HCT116 (cell line): ENCODE measurements at regions of chr11 and their contacts with region 1.

Region 1: GRCh38 chr11:118295834-118296454 is 8.6 kb upstream of the CD3E start:
- DNase-seq: peak; percentile 43
- ATAC-seq: peak; percentile 78
- H3K4me3 ChIP-seq: no peak overlapping the region
- H3K27ac ChIP-seq: no peak overlapping the region
- H3K4me1 ChIP-seq: peaks cover 0 to 10% of the 10 kb centered on the region in 2 experiments; a peak in 2 of 4 replicates
- H3K27me3 ChIP-seq: no peaks in the 10 kb centered on the region
- CTCF ChIP-seq: peak; percentile 72 to 79 (median 73)
- POLR2A ChIP-seq: no peak
- RAD21 ChIP-seq: peak; percentile 70

Region 2: GRCh38 chr11:118277306-118277705 is 18.6 kb before region 1 on chr11:
- CTCF ChIA-PET with region 1: interaction called, 12 read pairs
- POLR2A ChIA-PET with region 1: no interaction called
- RAD21 ChIA-PET with region 1: no interaction called
- intact Hi-C with region 1: no loop called
- DNase-seq: peak; percentile 44
- ATAC-seq: peak; percentile 90
- H3K4me3 ChIP-seq: peak overlapping the region in 1 of 2 experiments; percentile 34; a peak in 2 of 4 replicates
- H3K27ac ChIP-seq: no peak overlapping the region
- H3K4me1 ChIP-seq: peaks cover 3 to 22% of the 10 kb centered on the region in 2 experiments; a peak in 3 of 4 replicates
- H3K27me3 ChIP-seq: no peaks in the 10 kb centered on the region
- CTCF ChIP-seq: no peak
- POLR2A ChIP-seq: no peak
- RAD21 ChIP-seq: no peak

Region 3: DNA sequence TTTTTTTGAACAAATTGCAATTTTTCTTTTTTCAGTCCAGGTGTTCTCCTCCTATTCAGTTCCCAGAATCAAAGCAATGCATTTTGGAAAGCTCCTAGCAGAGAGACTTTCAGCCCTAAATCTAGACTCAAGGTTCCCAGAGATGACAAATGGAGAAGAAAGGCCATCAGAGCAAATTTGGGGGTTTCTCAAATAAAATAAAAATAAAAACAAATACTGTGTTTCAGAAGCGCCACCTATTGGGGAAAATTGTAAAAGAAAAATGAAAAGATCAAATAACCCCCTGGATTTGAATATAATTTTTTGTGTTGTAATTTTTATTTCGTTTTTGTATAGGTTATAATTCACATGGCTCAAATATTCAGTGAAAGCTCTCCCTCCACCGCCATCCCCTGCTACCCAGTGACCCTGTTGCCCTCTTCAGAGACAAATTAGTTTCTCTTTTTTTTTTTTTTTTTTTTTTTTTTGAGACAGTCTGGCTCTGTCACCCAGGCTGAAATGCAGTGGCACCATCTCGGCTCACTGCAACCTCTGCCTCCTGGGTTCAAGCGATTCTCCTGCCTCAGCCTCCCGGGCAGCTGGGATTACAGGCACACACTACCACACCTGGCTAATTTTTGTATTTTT is 57.3 kb after region 1 on chr11:
- CTCF ChIA-PET with region 1: interaction called, 5 read pairs
- POLR2A ChIA-PET with region 1: no interaction called
- RAD21 ChIA-PET with region 1: no interaction called
- intact Hi-C with region 1: loop called (anchors 2 kb)
- DNase-seq: no peak
- ATAC-seq: no peak; the same call in 1 of the 2 replicates
- H3K4me3 ChIP-seq: no peak overlapping the region
- H3K27ac ChIP-seq: no peak overlapping the region
- H3K4me1 ChIP-seq: no peaks in the 10 kb centered on the region
- H3K27me3 ChIP-seq: peaks cover 22% of the 10 kb centered on the region
- CTCF ChIP-seq: peak; percentile 45 to 76 (median 70); a peak in 5 of 6 replicates
- POLR2A ChIP-seq: no peak
- RAD21 ChIP-seq: peak; percentile 62

Region 4: GRCh38 chr11:118488480-118489109 is 192.7 kb after region 1 on chr11:
- CTCF ChIA-PET with region 1: interaction called, 7 read pairs
- POLR2A ChIA-PET with region 1: no interaction called
- RAD21 ChIA-PET with region 1: no interaction called
- intact Hi-C with region 1: loop called (anchors 1 kb)
- DNase-seq: peak; percentile 59
- ATAC-seq: peak; percentile 81
- H3K4me3 ChIP-seq: no peak overlapping the region
- H3K27ac ChIP-seq: no peak overlapping the region
- H3K4me1 ChIP-seq: no peaks in the 10 kb centered on the region
- H3K27me3 ChIP-seq: no peaks in the 10 kb centered on the region
- CTCF ChIP-seq: peak; percentile 79 to 91 (median 83)
- POLR2A ChIP-seq: no peak
- RAD21 ChIP-seq: peak; percentile 91

Region 5: DNA sequence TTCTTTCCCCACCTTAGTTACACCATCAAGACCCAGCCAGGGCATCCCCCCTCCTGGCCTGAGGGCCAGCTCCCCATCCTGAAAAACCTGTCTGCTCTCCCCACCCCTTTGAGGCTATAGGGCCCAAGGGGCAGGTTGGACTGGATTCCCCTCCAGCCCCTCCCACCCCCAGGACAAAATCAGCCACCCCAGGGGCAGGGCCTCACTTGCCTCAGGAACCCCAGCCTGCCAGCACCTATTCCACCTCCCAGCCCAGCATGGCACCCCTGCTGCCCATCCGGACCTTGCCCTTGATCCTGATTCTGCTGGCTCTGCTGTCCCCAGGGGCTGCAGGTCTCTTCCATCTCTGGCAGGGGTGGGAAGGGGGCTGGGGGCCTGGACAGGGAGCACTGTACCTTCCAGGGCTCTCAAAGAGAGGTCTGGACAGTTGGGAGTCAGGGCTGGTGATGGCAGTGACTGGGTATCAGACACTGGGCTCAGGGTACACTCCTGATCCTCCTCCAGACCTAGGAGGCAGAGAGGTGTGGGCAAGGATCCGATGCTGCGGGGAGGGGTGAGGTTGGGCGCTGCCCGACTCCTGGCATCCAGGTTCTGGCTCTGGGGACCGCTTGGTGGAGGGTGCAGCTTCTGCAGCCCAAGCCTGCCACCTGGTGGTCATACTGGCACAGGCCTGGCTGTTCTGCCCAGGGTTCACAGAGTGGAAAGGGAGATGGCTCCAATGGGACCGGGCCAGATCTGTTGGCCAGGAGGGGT is 660.3 kb after region 1 on chr11 and contains the start of gene UPK2:
- CTCF ChIA-PET with region 1: no interaction called
- POLR2A ChIA-PET with region 1: no interaction called
- RAD21 ChIA-PET with region 1: no interaction called
- intact Hi-C with region 1: no loop called
- DNase-seq: peak; percentile 78
- ATAC-seq: peak; percentile 99
- H3K4me3 ChIP-seq: no peak within 1 kb of the TSS
- H3K27ac ChIP-seq: no peak within 1 kb of the TSS
- H3K4me1 ChIP-seq: peaks cover 0 to 18% of the 10 kb centered on the region in 2 experiments; a peak in 2 of 4 replicates
- H3K27me3 ChIP-seq: no peaks in the 10 kb centered on the region
- CTCF ChIP-seq: peak; percentile 96 to 97 (median 96)
- POLR2A ChIP-seq: no peak
- RAD21 ChIP-seq: peak; percentile 100
- total RNA-seq, gene UPK2: 0.42 TPM

Region 6: DNA sequence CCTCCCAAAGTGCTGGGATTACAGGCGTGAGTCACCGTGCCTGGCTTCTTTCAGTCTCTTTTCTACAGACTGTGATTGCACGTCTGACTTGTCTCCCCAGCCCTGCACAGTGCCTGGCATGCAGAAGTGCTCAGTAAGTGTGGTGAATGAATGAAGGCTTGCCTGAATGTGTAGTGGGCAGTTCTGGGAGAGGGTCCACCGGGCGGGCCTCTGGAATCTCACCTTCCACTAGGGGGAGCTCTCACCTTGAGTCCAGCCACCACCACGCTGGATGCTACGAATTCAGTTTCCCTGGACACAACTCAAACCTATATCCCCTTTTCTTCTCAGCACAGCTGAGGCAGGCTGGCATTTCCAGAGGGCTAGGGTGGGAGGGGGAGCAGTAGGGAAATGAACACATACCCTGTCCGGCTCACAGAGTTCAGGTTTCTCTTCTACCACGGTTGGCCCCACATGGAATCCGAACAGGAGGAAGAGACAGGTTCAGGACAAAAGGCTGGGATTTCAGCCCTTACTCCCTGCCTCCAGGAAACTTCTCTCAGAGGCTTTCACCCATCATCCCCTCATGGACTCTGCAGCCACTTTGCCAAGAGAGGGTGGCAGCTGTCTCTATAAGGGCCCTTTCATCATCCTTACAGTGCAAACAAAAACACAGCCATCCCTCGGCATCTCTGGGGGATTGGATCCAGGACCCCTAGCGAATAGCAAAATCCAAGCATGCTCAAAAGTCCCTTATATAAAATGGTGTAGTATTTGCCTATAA is 1346.2 kb after region 1 on chr11:
- CTCF ChIA-PET with region 1: no interaction called
- POLR2A ChIA-PET with region 1: no interaction called
- RAD21 ChIA-PET with region 1: no interaction called
- intact Hi-C with region 1: no loop called
- DNase-seq: peak; percentile 4
- ATAC-seq: peak; percentile 84
- H3K4me3 ChIP-seq: no peak overlapping the region
- H3K27ac ChIP-seq: no peak overlapping the region
- H3K4me1 ChIP-seq: no peaks in the 10 kb centered on the region
- H3K27me3 ChIP-seq: no peaks in the 10 kb centered on the region
- CTCF ChIP-seq: peak; percentile 47 to 84 (median 81); a peak in 5 of 6 replicates
- POLR2A ChIP-seq: no peak
- RAD21 ChIP-seq: peak; percentile 72